CD8-positive, alpha-beta memory T cell (primary cell): ENCODE measurements at regions of chr7 and their contacts with region 1.

Region 1: GRCh38 chr7:100563809-100564400 is 9.8 kb downstream of the SAP25 start:
- DNase-seq: peak; percentile 68 to 88 (median 77)
- H3K4me3 ChIP-seq: no peak overlapping the region
- H3K4me3 Mint-ChIP-seq: no peak overlapping the region
- H3K27ac ChIP-seq: no peak overlapping the region
- H3K27ac Mint-ChIP-seq: peak overlapping the region in 4 of 8 donors; percentile 40 to 88 (median 66)
- H3K4me1 ChIP-seq: peaks cover 33% of the 10 kb centered on the region
- H3K4me1 Mint-ChIP-seq: peaks cover 18 to 35% (median 25%) of the 10 kb centered on the region in 3 donors
- H3K27me3 ChIP-seq: no peaks in the 10 kb centered on the region
- H3K27me3 Mint-ChIP-seq: peaks cover 0 to 1% of the 10 kb centered on the region in 2 donors

Region 2: DNA sequence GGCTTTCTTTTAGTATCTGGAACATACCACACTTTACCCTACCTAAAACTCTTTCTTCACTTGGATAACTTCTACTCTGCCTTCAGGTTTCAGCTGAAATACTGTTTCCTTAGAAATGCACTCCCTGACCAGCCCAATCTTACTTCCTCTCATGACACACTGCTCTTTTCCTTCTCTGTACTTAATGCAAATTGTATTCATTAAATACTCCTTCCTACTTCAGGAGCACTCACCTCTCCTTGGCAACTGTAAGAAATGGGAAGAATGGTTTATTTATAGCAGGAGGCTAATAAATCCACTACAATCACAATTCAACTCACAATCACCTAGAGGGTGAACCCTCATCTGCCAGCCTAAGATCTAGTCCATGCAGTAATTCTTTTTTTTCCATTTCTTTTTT is 150.6 kb before region 1 on chr7:
- CTCF ChIA-PET with region 1: no interaction called
- POLR2A ChIA-PET with region 1: no interaction called
- DNase-seq: no peak
- H3K4me3 ChIP-seq: no peak overlapping the region
- H3K4me3 Mint-ChIP-seq: no peak overlapping the region
- H3K27ac ChIP-seq: no peak overlapping the region
- H3K27ac Mint-ChIP-seq: no peak overlapping the region
- H3K4me1 ChIP-seq: no peaks in the 10 kb centered on the region
- H3K4me1 Mint-ChIP-seq: no peaks in the 10 kb centered on the region
- H3K27me3 ChIP-seq: peaks cover 3% of the 10 kb centered on the region
- H3K27me3 Mint-ChIP-seq: peaks cover 0 to 3% of the 10 kb centered on the region in 2 donors

Region 3: GRCh38 chr7:100469227-100470044 is 94.5 kb before region 1 on chr7:
- CTCF ChIA-PET with region 1: interaction called, 174 read pairs
- POLR2A ChIA-PET with region 1: interaction called, 13 read pairs
- DNase-seq: peak; percentile 69 to 86 (median 80)
- H3K4me3 ChIP-seq: no peak overlapping the region
- H3K4me3 Mint-ChIP-seq: no peak overlapping the region
- H3K27ac ChIP-seq: no peak overlapping the region
- H3K27ac Mint-ChIP-seq: peak overlapping the region in 7 of 8 donors; percentile 64 to 83 (median 70)
- H3K4me1 ChIP-seq: peaks cover 24% of the 10 kb centered on the region
- H3K4me1 Mint-ChIP-seq: peaks cover 17 to 46% (median 31%) of the 10 kb centered on the region in 3 donors
- H3K27me3 ChIP-seq: no peaks in the 10 kb centered on the region
- H3K27me3 Mint-ChIP-seq: no peaks in the 10 kb centered on the region

Region 4: GRCh38 chr7:100516135-100516812 is 47.6 kb before region 1 on chr7:
- CTCF ChIA-PET with region 1: interaction called, 17 read pairs
- POLR2A ChIA-PET with region 1: interaction called, 6 read pairs
- DNase-seq: peak; percentile 30 to 84 (median 62)
- H3K4me3 ChIP-seq: peak overlapping the region; percentile 34
- H3K4me3 Mint-ChIP-seq: peak overlapping the region in 6 of 7 donors; percentile 57 to 87 (median 62)
- H3K27ac ChIP-seq: peak overlapping the region; percentile 10
- H3K27ac Mint-ChIP-seq: peak overlapping the region; percentile 0 to 87 (median 32)
- H3K4me1 ChIP-seq: peaks cover 36% of the 10 kb centered on the region
- H3K4me1 Mint-ChIP-seq: peaks cover 27 to 35% (median 29%) of the 10 kb centered on the region in 3 donors
- H3K27me3 ChIP-seq: no peaks in the 10 kb centered on the region
- H3K27me3 Mint-ChIP-seq: no peaks in the 10 kb centered on the region

Region 5: DNA sequence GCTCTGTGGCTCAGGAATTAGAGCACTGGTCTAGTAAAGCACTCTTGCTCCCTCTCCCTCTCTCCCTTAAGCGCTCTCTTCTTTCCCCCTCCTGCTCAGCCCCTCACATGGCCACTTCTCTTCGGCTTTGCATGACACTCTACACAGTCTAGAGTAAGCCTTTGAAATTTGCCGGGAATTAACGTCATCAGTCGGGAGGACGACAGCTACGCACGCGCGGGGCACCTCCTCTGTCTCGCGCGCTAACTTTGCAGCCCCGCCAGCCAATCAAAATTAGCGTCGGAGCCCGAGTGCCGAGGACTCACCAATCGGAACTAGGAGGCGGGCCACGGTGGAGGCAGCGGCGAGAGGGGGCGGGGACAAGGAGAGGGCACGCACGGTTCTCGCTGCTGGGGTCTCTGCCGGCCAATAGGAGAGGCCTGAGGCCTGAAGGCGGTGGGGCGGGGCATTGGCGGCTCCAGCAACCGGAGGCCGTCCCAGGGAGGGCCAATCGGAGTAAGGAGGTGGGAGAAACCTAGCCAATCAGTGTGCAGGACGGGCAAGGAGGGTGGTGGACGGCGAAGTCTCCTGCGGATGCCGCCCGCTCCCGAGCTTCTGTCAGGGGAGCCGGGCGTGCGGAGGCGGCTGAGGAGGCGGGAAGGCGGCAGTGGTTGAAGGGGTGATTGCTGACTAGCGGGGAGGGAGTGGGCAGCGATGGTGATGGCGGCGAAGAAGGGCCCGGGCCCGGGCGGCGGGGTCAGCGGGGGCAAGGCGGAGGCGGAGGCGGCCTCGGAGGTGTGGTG is 25.1 kb before region 1 on chr7 and contains the start of gene AGFG2:
- CTCF ChIA-PET with region 1: interaction called, 21 read pairs
- POLR2A ChIA-PET with region 1: interaction called, 8 read pairs
- DNase-seq: peak; percentile 100
- H3K4me3 ChIP-seq: peak within 1 kb of the TSS; percentile 79
- H3K4me3 Mint-ChIP-seq: peak within 1 kb of the TSS; percentile 95 to 99 (median 96)
- H3K27ac ChIP-seq: peak within 1 kb of the TSS; percentile 64
- H3K27ac Mint-ChIP-seq: peak within 1 kb of the TSS; percentile 87 to 98 (median 92)
- H3K4me1 ChIP-seq: peaks cover 45% of the 10 kb centered on the region
- H3K4me1 Mint-ChIP-seq: peaks cover 47 to 52% (median 50%) of the 10 kb centered on the region in 3 donors
- H3K27me3 ChIP-seq: no peaks in the 10 kb centered on the region
- H3K27me3 Mint-ChIP-seq: peaks cover 0 to 1% of the 10 kb centered on the region in 2 donors
- total RNA-seq, gene AGFG2: 60.5 to 63.1 TPM

Region 6: GRCh38 chr7:100575746-100576383 is 12.0 kb after region 1 on chr7:
- CTCF ChIA-PET with region 1: interaction called, 19 read pairs
- POLR2A ChIA-PET with region 1: interaction called, 3 read pairs
- DNase-seq: no peak
- H3K4me3 ChIP-seq: no peak overlapping the region
- H3K4me3 Mint-ChIP-seq: no peak overlapping the region
- H3K27ac ChIP-seq: no peak overlapping the region
- H3K27ac Mint-ChIP-seq: no peak overlapping the region
- H3K4me1 ChIP-seq: peaks cover 19% of the 10 kb centered on the region
- H3K4me1 Mint-ChIP-seq: peaks cover 6 to 17% (median 16%) of the 10 kb centered on the region in 3 donors
- H3K27me3 ChIP-seq: no peaks in the 10 kb centered on the region
- H3K27me3 Mint-ChIP-seq: no peaks in the 10 kb centered on the region

Region 7: DNA sequence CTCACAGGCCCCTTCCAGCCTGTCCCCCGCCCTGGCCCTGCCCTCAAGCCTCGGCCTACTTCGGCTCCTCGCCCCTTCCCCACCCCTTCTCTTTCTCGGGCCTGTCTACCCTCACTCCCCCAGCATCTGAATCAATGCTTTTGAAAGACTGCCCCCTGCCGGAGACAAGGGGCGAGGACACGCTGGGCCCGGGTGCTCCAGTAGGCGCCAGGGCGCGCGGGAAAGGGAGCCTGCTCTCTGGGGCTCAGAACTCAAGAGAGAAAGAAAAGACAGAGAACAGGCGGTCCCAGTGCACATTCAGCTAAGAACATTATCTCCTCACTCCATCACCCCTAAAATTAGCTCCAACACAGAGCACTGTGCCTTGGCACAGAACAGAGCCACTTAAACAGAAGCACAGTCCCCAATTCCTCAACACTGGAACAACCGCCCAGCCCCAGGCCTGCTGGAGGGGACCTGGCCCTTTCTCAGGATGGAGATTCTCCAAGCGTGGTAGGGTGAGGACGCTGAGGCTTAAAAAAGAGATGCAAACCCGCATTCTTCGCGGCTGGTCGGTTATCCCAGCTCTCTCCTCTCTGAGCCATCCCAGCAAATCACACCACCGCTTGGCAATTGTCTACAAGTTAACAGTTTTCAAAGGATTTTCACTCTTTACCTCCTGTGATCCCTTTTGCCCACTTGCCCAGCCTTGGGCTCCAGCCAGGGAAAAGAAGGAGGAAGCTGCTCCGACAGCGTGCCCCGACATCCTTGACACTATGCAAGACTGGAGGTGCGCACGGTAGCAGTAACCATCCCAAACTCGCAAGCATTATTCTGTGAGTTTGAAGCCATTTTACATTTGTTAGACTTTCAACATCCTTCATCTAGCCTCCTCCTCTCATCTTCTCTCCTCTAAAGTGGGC is 128.0 kb after region 1 on chr7:
- CTCF ChIA-PET with region 1: interaction called, 35 read pairs
- POLR2A ChIA-PET with region 1: interaction called, 5 read pairs
- DNase-seq: peak; percentile 69 to 85 (median 71)
- H3K4me3 ChIP-seq: peak overlapping the region; percentile 81
- H3K4me3 Mint-ChIP-seq: peak overlapping the region; percentile 88 to 97 (median 94)
- H3K27ac ChIP-seq: no peak overlapping the region
- H3K27ac Mint-ChIP-seq: peak overlapping the region; percentile 15 to 95 (median 86)
- H3K4me1 ChIP-seq: peaks cover 26% of the 10 kb centered on the region
- H3K4me1 Mint-ChIP-seq: peaks cover 36 to 49% (median 39%) of the 10 kb centered on the region in 3 donors
- H3K27me3 ChIP-seq: no peaks in the 10 kb centered on the region
- H3K27me3 Mint-ChIP-seq: no peaks in the 10 kb centered on the region